KBM-7 (cell line): ENCODE measurements at regions of chr7 and their contacts with region 1.

Region 1: DNA sequence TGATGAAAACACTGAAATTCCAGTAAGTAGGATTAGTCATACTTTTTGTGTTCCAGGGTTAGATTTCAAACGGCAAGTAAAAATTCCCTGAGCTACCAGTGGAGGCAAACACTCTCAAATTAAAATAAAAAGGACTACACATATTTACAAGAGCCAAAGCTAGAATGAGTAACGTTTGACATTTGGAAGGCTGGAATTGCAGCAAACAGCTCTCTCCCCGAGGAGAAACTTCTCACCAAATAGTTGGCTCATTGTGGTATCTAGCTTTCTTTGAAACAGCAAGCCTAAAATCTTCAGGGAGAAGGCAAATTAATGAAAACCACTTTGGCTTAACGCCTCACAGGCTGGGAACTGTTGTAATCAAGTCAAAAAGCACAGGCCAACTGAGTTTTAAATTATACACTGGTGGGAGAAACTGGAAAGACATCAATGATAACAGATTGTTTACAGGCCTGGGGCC is 288.3 kb downstream of the SNX13 start:
- DNase-seq: no peak

Region 2: DNA sequence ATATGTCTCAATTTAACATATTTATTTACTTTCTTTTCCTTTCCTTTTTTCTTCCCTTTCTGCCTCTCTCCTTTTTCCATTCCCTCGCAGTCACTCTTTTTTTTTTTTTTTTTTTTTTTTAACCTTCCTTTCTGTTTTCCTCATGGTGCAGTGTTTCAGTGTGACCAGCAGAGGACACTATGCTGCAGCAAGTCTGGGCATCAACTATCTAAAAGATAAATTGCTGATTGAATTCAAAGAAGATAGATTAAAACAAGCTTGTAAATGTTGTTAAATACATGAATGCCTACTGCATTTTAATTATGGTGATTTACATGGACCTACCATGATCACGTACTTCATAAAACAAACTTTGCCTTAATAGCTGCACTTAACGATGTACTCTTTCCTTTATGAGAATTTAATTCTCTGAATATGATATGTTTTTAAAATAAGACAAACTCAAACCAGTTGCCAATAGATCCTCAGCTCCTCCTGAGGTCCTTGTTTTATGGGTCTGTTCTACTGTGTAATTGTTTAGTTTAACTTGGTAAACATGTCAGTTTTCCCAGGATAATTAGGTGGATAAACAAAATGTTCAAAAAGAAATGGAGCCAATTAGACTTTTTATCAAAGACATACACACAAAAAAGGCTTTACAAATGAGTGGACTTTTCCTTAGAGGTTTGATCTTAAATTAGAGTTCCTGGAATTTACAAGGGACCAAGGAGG is 669.2 kb before region 1 on chr7:
- in situ Hi-C with region 1: loop called (anchors 25 kb)
- DNase-seq: peak; percentile 77